Heart left ventricle (tissue), 16 donors: ENCODE measurements at regions of chr4 and their contacts with region 1.

Region 1: DNA sequence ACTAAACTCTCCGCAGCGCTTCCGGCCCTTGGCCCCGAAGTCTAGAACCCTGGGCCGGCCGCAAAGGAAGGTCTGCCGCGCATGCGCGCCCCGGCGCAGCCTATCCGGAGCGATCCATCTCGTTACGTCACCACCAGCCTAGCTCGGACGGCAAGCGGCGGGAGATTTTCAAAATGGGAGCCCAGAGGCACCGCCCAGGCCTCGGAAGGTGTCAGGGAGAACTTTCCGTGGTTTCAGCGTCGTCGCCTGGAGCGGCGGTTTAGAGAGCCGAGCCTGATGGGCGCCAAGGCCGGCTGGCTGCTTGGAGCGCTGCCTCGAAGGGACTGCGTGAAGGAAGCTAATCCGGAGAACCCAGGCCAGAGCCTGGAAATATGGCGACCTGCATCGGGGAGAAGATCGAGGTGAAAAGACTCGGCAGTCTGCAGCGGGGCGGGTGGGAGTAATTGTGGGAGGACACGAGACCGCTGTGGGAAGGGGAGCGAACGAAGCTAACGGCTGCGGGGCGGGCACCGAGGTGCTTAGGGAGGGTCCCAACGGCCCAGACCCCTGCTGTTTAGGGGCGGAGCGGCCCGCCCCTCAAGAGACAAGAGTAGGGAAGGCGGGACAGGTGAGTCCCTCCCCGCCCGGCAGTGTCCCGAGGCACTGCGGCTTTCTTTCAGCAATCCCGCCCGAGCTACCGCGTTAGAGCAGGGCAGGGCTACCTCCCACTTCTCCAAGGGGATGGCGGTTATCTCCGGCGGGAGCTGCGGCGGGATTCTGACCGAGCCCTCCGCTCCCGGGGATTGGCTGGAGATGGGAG is at the start of gene PLK4:
- DNase-seq: peak; percentile 94 to 98 (median 97)
- ATAC-seq: peak; percentile 99
- H3K4me3 ChIP-seq: peak within 1 kb of the TSS; percentile 56 to 89 (median 77)
- H3K27ac ChIP-seq: peak within 1 kb of the TSS in 11 of 12 donors; percentile 21 to 90 (median 74)
- H3K4me1 ChIP-seq: peaks cover 0 to 21% (median 10%) of the 10 kb centered on the region in 12 donors
- H3K27me3 ChIP-seq: no peaks in the 10 kb centered on the region
- CTCF ChIP-seq: no peak
- POLR2A ChIP-seq: no peak
- total RNA-seq, gene PLK4: 0.25 to 4.0 (median 1.1) TPM

Region 2: GRCh38 chr4:127686656-127687055 is 194.3 kb before region 1 on chr4:
- intact Hi-C with region 1: no loop called
- DNase-seq: no peak
- ATAC-seq: no peak
- H3K4me3 ChIP-seq: no peak overlapping the region
- H3K27ac ChIP-seq: no peak overlapping the region
- H3K4me1 ChIP-seq: no peaks in the 10 kb centered on the region
- H3K27me3 ChIP-seq: no peaks in the 10 kb centered on the region
- CTCF ChIP-seq: no peak
- POLR2A ChIP-seq: no peak

Region 3: DNA sequence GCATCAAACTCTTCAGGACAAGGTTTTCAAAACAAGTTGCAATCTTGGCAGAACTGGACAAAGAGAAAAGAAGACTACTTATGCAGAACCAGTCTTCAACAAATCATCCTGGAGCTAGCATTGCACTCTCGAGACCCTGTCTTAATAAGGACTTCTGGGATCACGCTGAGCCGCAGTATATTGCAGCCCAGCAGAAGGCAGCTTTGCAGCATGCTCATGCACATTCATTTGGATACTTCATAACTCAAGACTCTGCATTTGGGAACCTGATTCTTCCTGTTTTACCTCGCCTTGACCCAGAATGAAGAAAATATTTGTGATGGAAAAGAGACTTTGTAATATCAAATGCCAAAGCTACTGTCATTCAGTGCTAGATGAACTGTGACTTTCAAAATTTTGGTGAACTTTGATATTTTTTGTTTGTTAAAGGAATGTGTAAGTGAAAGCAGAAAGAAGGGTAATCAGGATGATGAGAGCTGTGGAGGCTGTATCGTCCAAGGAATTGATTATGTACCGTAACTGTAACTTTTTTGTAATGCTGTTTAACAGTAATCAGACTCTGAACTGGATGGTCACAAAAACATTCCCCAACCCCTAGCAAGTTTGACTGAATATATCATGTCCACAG is 71.7 kb before region 1 on chr4:
- intact Hi-C with region 1: no loop called
- DNase-seq: no peak
- ATAC-seq: no peak
- H3K4me3 ChIP-seq: no peak overlapping the region
- H3K27ac ChIP-seq: no peak overlapping the region
- H3K4me1 ChIP-seq: no peaks in the 10 kb centered on the region
- H3K27me3 ChIP-seq: no peaks in the 10 kb centered on the region
- CTCF ChIP-seq: peak in 1 of 12 donors; percentile 3
- POLR2A ChIP-seq: no peak

Region 4: GRCh38 chr4:127959794-127960193 is 78.8 kb after region 1 on chr4:
- intact Hi-C with region 1: loop called in 4 of 10 experiments (anchors 5 to 10 kb)
- DNase-seq: no peak
- ATAC-seq: no peak
- H3K4me3 ChIP-seq: no peak overlapping the region
- H3K27ac ChIP-seq: no peak overlapping the region
- H3K4me1 ChIP-seq: peaks cover 0 to 14% (median 0%) of the 10 kb centered on the region in 12 donors
- H3K27me3 ChIP-seq: no peaks in the 10 kb centered on the region
- CTCF ChIP-seq: no peak
- POLR2A ChIP-seq: no peak

Region 5: DNA sequence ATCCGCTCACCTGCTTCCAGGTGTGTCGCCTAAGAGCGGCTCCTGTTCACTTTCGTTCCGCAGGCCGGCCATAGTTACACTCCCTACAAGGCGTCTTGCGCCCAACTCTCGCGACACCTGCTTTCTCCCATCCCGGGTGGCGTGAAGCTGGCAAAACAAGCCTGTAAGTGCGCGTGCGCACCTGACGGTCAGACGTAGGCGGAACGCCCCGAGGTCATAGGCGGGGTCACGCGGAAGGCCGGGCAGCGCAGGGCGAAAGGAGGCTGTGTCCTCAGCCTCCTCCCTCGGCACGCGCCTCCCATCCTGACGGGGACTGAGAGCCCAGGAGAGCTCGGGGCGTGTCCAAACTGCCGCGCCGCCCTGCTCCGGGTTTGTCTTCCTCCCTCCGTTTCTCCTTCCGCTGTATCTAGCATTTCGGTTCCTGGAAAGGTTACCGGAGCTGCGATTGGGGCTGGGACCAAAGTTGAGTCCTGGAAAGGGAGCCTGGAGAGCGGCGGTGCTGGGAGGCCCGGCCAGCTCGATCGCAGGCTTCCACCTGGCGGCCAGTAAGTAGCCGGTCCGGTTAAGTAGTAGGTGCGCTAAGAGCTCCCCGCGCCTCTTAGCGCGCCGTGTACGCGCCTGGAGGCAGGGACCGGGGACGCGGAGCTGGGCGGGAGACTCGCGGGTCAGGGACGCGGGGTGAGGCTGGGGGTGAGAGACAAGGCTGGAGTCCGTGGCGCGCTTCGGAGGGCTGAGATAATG is 84.3 kb after region 1 on chr4 and contains the starts of genes ABHD18 and MFSD8:
- intact Hi-C with region 1: loop called in 5 of 10 experiments (anchors 5 to 10 kb)
- DNase-seq: peak; percentile 98 to 100 (median 100)
- ATAC-seq: peak; percentile 95 to 99 (median 98)
- H3K4me3 ChIP-seq: peak within 1 kb of the TSS; percentile 73 to 94 (median 80)
- H3K27ac ChIP-seq: peak within 1 kb of the TSS; percentile 85 to 97 (median 94)
- H3K4me1 ChIP-seq: peaks cover 0 to 46% (median 16%) of the 10 kb centered on the region in 12 donors
- H3K27me3 ChIP-seq: no peaks in the 10 kb centered on the region
- CTCF ChIP-seq: peak in 11 of 12 donors; percentile 8 to 60 (median 47)
- POLR2A ChIP-seq: peak in 1 of 2 donors; percentile 70
- total RNA-seq, gene ABHD18: 6.3 to 56.3 (median 21.0) TPM
- total RNA-seq, gene MFSD8: 6.1 to 17.4 (median 10.3) TPM